Right ventricle myocardium superior (tissue), 1 donor: ENCODE measurements at regions of chr4 and their contacts with region 1.

Region 1: GRCh38 chr4:143335979-143336780 is 496 bp upstream of the GAB1 start:
- DNase-seq: peak; percentile 94
- ATAC-seq: peak; percentile 90

Region 2: GRCh38 chr4:143202824-143203223 is 133.4 kb before region 1 on chr4:
- intact Hi-C with region 1: loop called (anchors 5 kb)
- DNase-seq: no peak
- ATAC-seq: no peak

Region 3: DNA sequence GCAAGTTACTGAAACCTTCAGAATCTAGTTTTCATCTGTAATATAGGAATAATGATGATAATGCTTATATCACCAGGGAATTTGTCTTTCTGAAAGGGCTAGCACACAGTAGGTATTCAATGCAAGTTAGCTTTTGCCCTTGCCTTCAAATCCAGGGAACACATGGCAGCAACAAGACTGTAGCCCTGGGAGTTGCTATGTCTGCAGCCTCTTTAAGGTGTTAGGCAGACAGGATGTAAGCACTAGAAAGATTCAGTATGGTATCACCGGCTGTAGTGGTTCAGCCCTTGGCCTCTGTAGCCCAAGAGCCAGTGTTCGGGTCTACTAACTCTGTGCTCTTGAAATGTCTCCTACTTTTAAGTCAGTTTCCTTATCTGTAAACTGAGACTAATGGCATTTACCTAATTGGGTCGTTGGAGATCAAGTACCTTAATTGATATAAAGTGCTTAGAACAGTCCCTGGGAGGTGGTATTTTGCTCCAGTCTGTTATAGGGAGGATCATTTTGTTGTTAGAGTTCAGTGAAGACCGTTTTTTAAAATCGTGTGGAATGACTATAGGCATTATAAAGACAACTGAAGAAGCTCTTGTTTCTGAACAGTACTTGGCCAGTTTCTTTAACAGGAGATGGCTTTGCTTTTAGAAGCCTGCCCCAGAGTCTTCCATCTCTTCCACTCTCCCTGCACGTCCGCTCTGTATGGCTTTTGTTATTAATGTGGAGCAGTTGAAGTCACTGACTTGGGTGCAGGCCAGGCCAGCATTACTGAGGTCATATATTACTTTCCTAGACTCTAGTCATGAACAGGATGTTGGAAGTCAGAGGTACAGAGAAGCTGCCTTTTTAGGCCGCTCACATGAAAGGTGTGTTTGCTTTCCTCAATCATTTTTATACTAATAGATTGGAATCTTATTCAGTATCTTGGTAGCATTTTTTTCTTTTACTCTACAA is 45.3 kb after region 1 on chr4:
- intact Hi-C with region 1: loop called (anchors 5 kb)
- DNase-seq: peak; percentile 90
- ATAC-seq: peak; percentile 79

Region 4: DNA sequence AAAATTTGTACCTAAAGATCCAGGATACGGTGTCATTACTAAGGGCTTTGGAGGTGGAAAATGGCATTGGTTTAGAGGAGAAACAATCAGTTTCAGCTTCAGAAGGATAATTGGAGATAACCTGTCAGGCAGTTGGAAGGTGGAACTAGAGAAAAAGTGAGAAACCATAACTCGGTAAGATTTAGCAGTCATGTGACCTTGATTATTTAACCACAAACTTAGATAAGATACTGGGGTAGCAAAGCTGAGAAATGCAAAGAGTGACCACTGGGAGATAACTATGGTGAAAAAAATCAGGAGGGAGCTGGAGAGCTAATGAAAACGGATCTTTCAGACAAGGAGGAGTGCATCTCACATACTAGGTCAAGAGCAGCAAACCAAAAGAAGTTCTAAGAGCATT is 119.0 kb after region 1 on chr4:
- intact Hi-C with region 1: loop called (anchors 10 kb)
- DNase-seq: no peak
- ATAC-seq: peak; percentile 21